KBM-7 (cell line): ENCODE measurements at regions of chr3 and their contacts with region 1.

Region 1: DNA sequence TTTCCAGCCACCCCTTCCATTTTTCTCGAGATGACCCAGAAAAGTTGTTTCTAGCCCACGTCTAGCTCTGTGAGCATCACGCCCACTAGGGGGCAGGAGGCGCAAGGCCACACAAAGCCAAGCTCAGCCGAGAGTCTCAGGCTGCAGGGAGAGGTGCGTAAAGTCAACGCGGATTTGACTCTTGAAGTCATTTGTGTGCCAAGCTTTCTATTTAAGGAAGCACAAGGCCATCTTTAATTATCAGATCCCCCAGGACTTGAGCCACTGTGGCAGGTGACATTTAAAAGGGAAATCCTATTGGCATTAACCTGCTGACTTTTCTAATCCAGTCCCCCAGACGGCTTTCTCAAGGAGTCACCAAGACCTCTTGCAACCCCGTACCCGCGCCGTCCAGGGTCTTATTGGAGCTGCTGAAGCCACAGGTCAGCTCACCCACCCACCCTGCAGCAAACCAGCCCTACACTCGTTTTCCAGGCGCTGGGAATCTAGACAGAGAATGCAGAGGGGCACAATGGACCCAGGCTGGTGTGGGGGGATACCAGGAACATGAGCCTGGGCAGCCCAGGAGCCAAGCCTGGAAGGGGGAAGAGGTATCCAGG is 62.1 kb downstream of the CAPN7 start:
- DNase-seq: peak; percentile 86

Region 2: GRCh38 chr3:15384510-15385237 is 116.5 kb after region 1 on chr3:
- in situ Hi-C with region 1: loop called (anchors 10 kb)
- DNase-seq: no peak